Activated T-helper 2 cell treated with anti-CD3 and anti-CD28 coated beads, Interferon-gamma antibody, Interleukin-2, Interleukin-4, amounts not matched to agents 10 μg/mL and 5 μg/mL and 100 μg/mL, durations not matched to agents 14 hours and 24 hours and 36 hours (primary cell): ENCODE measurements at regions of chr11 and their contacts with region 1.

Region 1: GRCh38 chr11:134253188-134253993 is at the starts of genes ACAD8 and THYN1:
- DNase-seq: peak; percentile 93
- H3K4me3 Mint-ChIP-seq: peak within 1 kb of the TSS; percentile 99
- H3K27ac Mint-ChIP-seq: peak within 1 kb of the TSS; percentile 85
- H3K4me1 Mint-ChIP-seq: peaks cover 31% of the 10 kb centered on the region
- H3K27me3 Mint-ChIP-seq: no peaks in the 10 kb centered on the region
- total RNA-seq, gene ACAD8: 27.3 and 27.7 TPM in 2 replicates
- total RNA-seq, gene THYN1: 55.6 and 60.8 TPM in 2 replicates

Region 2: DNA sequence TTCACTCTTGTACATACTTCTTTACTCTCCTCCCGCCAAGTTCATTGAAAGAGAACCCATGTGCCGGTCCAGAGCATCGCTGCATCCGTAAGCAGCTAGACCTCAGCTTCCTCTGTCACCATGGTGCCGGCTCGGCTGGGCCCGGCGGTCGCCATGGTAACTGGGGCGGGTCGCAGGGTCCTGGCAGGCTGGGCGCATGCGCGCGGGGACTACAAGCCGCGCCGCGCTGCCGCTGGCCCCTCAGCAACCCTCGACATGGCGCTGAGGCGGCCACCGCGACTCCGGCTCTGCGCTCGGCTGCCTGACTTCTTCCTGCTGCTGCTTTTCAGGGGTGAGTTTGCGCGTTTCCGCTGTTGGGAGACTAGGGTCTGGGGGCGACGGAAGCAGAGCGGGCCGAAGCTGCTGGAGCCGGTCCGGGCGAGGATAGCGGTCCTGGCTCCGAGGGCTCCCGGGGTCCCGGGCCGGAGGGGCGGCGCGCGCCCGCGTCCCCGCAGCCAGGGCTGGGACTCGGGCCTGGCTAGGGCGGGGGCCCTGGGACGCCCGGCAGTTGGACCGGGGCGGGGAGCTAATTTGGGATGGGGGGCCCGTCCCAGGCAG is 184.5 kb before region 1 on chr11 and contains the start of gene JAM3:
- intact Hi-C with region 1: no loop called
- DNase-seq: peak; percentile 95
- H3K4me3 Mint-ChIP-seq: peak within 1 kb of the TSS; percentile 86
- H3K27ac Mint-ChIP-seq: no peak within 1 kb of the TSS
- H3K4me1 Mint-ChIP-seq: peaks cover 9% of the 10 kb centered on the region
- H3K27me3 Mint-ChIP-seq: peaks cover 63% of the 10 kb centered on the region
- total RNA-seq, gene JAM3: 2.4 and 3.4 TPM in 2 replicates

Region 3: GRCh38 chr11:134207538-134208239 is 45.7 kb before region 1 on chr11:
- intact Hi-C with region 1: loop called (anchors 10 kb)
- DNase-seq: peak; percentile 55
- H3K4me3 Mint-ChIP-seq: no peak overlapping the region
- H3K27ac Mint-ChIP-seq: peak overlapping the region; percentile 28
- H3K4me1 Mint-ChIP-seq: peaks cover 15% of the 10 kb centered on the region
- H3K27me3 Mint-ChIP-seq: no peaks in the 10 kb centered on the region

Region 4: DNA sequence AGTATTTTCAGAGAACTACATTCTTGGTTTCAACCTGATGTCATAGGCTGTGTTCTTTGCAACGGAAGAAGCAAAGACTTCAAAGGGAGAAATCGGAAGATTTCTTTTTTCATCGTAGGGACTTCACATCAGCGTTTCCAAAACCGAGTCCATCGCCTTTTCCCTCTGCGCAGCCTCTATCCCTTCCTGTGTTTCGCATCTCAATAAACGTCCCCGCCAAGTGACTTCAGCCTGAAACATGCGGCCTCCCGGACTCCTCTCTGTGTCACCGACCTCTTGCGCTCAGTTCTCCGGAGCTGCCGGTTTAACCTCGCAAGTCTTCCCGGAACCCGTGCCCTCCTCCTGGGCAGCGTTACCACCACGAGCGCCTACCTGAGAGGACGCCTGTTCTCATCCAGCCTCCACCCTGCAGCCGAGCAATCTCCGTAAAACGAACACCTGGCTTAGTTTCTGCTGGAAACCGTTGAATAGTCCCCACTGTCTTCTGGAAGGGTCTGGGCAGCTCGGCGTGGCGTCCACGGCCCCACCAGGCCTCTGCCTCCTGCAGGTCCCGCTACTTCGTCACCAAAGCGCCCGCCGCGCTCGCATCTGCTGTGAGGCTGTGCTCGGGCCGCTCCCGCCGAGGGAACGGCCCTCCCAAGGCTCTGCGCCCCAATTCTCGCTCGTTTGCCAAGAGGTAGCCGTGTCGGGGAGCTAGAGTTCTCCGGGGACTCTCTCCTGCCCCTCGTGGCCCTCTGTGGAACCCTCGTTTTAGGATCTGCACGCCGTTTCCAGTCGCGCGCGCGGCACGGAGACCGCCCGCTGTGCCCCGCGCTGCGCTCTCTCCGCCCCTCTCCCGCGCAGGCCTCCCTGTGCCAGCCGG is 22.4 kb after region 1 on chr11 and contains the start of gene GLB1L3:
- intact Hi-C with region 1: loop called (anchors 1 kb)
- DNase-seq: peak; percentile 82
- H3K4me3 Mint-ChIP-seq: peak within 1 kb of the TSS; percentile 87
- H3K27ac Mint-ChIP-seq: peak within 1 kb of the TSS; percentile 96
- H3K4me1 Mint-ChIP-seq: peaks cover 56% of the 10 kb centered on the region
- H3K27me3 Mint-ChIP-seq: peaks cover 2% of the 10 kb centered on the region
- total RNA-seq, gene GLB1L3: 14.5 and 15.4 TPM in 2 replicates

Region 5: DNA sequence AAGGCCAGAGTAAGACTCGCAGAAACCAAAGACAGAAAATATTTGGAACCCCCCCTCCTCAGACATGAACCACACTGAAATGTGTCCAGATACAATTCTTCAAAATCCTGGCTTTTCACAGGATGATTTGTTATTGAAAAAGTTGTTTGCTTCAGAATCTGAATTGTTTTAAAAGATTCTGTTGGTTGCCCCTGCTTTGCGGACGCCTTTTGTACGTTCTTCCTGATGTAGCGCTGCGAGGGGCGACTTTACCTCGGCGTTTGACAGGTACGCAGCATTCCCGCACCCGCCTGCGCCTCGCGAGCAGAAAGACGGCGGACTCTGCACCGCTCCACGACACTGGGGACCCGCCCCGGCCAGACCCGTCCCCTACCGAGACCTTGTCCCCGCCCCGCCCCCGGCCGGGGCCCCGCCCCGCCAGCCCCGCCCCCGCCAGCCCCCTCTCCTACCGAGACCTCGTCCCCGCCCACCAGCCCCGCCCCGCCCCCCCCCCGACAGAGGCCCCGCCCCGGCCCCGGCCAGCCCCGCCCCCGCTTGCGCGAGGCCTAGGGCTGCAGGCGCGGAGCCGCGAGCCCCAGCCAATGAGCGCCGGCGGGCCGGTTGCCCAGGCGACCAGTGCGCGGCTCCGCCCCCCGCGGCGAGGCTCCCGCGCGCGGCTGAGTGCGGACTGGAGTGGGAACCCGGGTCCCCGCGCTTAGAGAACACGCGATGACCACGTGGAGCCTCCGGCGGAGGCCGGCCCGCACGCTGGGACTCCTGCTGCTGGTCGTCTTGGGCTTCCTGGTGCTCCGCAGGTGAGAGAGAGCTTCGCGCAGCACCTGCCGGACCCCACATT is 78.2 kb after region 1 on chr11 and contains the start of gene GLB1L2:
- intact Hi-C with region 1: loop called (anchors 1 kb)
- DNase-seq: peak; percentile 78
- H3K4me3 Mint-ChIP-seq: peak within 1 kb of the TSS; percentile 77
- H3K27ac Mint-ChIP-seq: no peak within 1 kb of the TSS
- H3K4me1 Mint-ChIP-seq: peaks cover 9% of the 10 kb centered on the region
- H3K27me3 Mint-ChIP-seq: peaks cover 50% of the 10 kb centered on the region
- total RNA-seq, gene GLB1L2: 3.1 and 4.3 TPM in 2 replicates